ENCODE measurements at regions of chr7 and their contacts with region 1.

Region 1: GRCh38 chr7:8365503-8366110 is 67.8 kb upstream of the NXPH1 start:
- DNase-seq: peak; percentile 57
- H3K4me3 Mint-ChIP-seq: no peak overlapping the region
- H3K27ac Mint-ChIP-seq: no peak overlapping the region
- H3K4me1 Mint-ChIP-seq: no peaks in the 10 kb centered on the region
- H3K27me3 Mint-ChIP-seq: peaks cover 57% of the 10 kb centered on the region
- CTCF ChIP-seq: peak; percentile 36

Region 2: DNA sequence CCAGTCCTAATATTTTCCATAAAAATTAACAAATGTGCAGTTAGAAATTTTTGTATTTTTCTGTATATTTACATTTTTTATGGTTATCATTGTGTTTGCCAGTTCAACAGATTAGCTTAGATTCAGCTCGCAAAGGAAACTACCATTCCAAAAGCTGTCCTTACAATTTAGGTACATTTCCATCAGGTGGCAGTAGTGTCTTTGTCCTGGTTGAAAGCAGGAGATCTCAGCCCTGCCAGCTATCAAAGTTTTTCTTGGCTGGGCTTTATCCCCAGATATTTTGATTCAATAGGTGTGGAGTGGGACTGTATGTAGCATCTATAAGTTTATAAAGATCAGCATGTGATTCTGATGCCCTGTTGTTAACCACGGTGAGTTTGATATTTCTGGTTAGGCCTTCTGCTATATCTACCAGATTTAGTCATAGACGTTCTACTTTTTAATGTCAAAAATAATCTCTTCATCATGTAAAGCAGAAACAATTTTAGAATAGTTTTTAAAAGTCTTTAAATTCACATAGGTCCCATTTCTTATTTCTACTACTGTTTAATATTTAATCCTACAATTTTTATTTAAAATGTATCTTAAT is 88.1 kb before region 1 on chr7:
- CTCF ChIA-PET with region 1: interaction called, 3 read pairs
- POLR2A ChIA-PET with region 1: no interaction called
- intact Hi-C with region 1: loop called (anchors 10 kb)
- DNase-seq: peak; percentile 51
- H3K4me3 Mint-ChIP-seq: no peak overlapping the region
- H3K27ac Mint-ChIP-seq: no peak overlapping the region
- H3K4me1 Mint-ChIP-seq: peaks cover 14% of the 10 kb centered on the region
- H3K27me3 Mint-ChIP-seq: no peaks in the 10 kb centered on the region
- CTCF ChIP-seq: peak; percentile 36

Region 3: DNA sequence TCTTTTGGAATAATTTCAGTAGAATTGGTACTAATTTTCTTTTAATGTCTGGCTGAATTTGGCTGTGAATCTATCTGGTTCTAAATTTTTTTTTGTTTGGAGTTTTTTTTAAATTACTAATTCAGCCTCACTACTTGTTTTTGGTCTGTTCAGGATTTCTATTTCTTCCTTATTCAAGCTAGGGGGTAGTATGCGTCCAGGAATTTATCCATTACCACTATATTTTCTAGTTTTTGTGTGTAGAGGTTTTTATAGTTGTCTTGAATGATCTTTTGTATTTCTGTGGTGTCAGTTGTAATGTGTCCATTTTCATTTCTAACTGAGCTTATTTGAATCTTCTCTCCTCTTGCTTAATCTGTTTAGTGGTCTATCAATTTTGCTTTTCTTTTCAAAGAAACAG is 54.7 kb before region 1 on chr7:
- CTCF ChIA-PET with region 1: no interaction called
- POLR2A ChIA-PET with region 1: no interaction called
- intact Hi-C with region 1: loop called (anchors 2 kb)
- DNase-seq: no peak
- H3K4me3 Mint-ChIP-seq: no peak overlapping the region
- H3K27ac Mint-ChIP-seq: no peak overlapping the region
- H3K4me1 Mint-ChIP-seq: no peaks in the 10 kb centered on the region
- H3K27me3 Mint-ChIP-seq: peaks cover 36% of the 10 kb centered on the region
- CTCF ChIP-seq: no peak

Region 4: DNA sequence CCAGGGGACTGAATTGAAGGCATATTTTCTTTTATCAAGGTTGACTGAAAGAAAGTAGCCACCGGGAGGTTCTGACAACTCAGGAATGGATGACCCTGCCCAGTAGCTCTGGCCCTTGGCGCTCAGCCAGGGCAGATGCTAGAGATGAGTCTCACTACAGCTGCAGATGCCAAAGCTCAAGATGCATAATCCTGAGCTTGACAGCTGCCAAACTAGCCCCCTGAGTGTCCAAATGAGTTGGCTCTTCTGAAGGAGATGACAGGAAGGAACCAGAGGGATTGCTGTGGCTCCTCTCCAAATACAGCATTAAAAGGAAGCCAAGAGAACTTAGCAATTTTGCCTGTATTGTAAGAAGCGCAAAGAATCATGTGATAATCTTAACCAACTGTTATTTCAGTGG is 146.2 kb after region 1 on chr7:
- CTCF ChIA-PET with region 1: no interaction called
- POLR2A ChIA-PET with region 1: no interaction called
- intact Hi-C with region 1: no loop called
- DNase-seq: no peak
- H3K4me3 Mint-ChIP-seq: no peak overlapping the region
- H3K27ac Mint-ChIP-seq: no peak overlapping the region
- H3K4me1 Mint-ChIP-seq: no peaks in the 10 kb centered on the region
- H3K27me3 Mint-ChIP-seq: peaks cover 34% of the 10 kb centered on the region
- CTCF ChIP-seq: no peak